ENCODE measurements at regions of chr3 and their contacts with region 1.

Region 1: GRCh38 chr3:182755308-182755707 is 38.0 kb upstream of the ATP11B start:
- DNase-seq: peak; percentile 56
- H3K4me3 ChIP-seq: no peak overlapping the region
- H3K27ac ChIP-seq: peak overlapping the region; percentile 60
- H3K4me1 ChIP-seq: peaks cover 17% of the 10 kb centered on the region
- H3K27me3 ChIP-seq: no peaks in the 10 kb centered on the region
- CTCF ChIP-seq: no peak
- POLR2A ChIP-seq: no peak

Region 2: DNA sequence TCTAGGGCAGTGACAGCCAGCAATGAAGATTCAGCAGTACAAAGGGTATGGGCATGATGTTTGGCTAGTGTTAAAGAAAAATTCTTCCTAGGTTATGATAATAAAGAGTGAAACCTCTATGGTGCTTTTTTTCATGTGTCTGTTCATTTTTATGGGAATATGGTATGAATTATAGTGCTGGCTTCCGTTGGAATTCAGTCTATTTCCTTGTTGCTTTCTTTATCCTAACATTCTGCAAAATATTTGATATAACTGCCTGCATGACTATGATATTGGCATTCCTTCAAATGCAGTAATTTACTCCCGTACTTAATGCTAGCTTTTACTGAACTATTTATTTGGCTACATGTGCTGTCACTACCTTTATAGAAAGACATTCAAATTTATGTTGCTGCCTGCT is 19.6 kb before region 1 on chr3:
- CTCF ChIA-PET with region 1: interaction called, 4 read pairs
- POLR2A ChIA-PET with region 1: no interaction called
- dilution Hi-C with region 1: no loop called
- intact Hi-C with region 1: loop called (anchors 1 kb)
- DNase-seq: peak; percentile 79
- H3K4me3 ChIP-seq: no peak overlapping the region
- H3K27ac ChIP-seq: peak overlapping the region; percentile 52
- H3K4me1 ChIP-seq: peaks cover 11% of the 10 kb centered on the region
- H3K27me3 ChIP-seq: no peaks in the 10 kb centered on the region
- CTCF ChIP-seq: no peak
- POLR2A ChIP-seq: no peak

Region 3: GRCh38 chr3:182785142-182785541 is 29.8 kb after region 1 on chr3:
- CTCF ChIA-PET with region 1: interaction called, 4 read pairs
- POLR2A ChIA-PET with region 1: no interaction called
- dilution Hi-C with region 1: no loop called
- intact Hi-C with region 1: loop called (anchors 1 kb)
- DNase-seq: peak; percentile 86
- H3K4me3 ChIP-seq: no peak overlapping the region
- H3K27ac ChIP-seq: no peak overlapping the region
- H3K4me1 ChIP-seq: peaks cover 30% of the 10 kb centered on the region
- H3K27me3 ChIP-seq: no peaks in the 10 kb centered on the region
- CTCF ChIP-seq: no peak
- POLR2A ChIP-seq: no peak

Region 4: DNA sequence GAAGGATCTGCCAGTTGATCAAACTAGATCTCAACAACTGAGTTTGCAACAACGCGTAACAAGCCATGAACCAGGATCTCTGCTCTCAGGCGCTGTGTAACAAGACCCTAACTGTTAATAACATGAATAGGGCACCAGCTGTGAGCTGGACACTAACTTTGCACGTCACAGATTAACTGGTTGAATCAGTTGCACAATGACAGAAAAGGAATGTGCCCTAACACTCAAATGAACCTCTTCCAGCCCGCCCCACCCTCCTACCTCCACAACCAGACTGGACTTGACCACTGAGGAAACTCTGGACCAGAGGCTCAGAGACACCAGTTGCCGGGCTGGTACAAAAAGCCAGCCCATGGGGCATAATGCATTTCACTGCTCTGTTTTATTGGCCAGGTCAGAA is 638.8 kb after region 1 on chr3:
- CTCF ChIA-PET with region 1: no interaction called
- POLR2A ChIA-PET with region 1: no interaction called
- dilution Hi-C with region 1: no loop called
- intact Hi-C with region 1: no loop called
- DNase-seq: no peak
- H3K4me3 ChIP-seq: no peak overlapping the region
- H3K27ac ChIP-seq: no peak overlapping the region
- H3K4me1 ChIP-seq: no peaks in the 10 kb centered on the region
- H3K27me3 ChIP-seq: peaks cover 9 to 21% of the 10 kb centered on the region in 2 experiments
- CTCF ChIP-seq: no peak
- POLR2A ChIP-seq: no peak

Measured in endothelial cell of umbilical vein (primary cell).